SK-N-SH (cell line): ENCODE measurements at regions of chr19 and their contacts with region 1.

Region 1: DNA sequence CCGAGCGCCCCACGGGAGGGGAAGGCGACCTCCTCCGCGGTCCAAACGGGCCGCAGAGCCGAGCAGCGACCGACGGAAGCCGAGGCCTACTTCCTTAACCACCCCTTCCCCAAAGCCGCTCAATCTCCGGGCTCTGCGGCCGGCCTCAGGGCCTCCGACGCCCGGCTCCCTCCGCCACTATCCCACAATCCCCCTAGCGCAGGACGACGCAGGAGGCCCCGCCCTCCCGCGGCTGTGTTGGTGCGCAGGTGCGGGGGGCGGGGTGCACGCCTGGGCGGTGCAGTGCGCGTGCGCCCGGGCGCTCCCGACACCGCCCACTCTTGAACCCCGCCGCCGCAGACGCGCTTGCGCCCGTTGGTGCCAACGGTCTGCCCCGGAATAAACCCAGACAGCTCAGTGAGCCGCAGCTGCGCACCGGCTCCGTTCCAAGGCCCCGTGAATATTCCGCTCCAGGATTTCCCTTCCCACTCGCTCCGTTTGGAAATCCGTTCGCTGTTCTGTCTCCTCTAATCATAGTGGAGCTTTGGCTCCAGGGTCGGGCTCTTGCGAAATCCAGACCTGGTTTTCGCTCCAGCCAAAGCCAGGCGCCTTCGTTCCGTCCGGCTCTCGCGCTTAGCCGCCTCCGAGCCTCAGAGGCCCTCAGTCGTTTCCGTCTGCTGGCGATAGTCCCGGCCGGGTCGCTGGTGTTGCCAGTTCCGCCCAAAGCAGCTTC is at the start of gene PPP6R1:
- DNase-seq: peak; percentile 100
- H3K4me3 ChIP-seq: peak within 1 kb of the TSS; percentile 87 to 94
- H3K27ac ChIP-seq: peak within 1 kb of the TSS; percentile 84 to 98
- H3K4me1 ChIP-seq: peaks cover 17 to 26% of the 10 kb centered on the region in 2 experiments; a peak in 3 of 4 replicates
- H3K27me3 ChIP-seq: no peaks in the 10 kb centered on the region
- CTCF ChIP-seq: no peak
- EP300 ChIP-seq: peak; percentile 65 to 74; a peak in 2 of 4 replicates
- RAD21 ChIP-seq: peak; percentile 42
- polyA plus RNA-seq, gene PPP6R1: 44.9 and 47.8 TPM in 2 replicates

Region 2: DNA sequence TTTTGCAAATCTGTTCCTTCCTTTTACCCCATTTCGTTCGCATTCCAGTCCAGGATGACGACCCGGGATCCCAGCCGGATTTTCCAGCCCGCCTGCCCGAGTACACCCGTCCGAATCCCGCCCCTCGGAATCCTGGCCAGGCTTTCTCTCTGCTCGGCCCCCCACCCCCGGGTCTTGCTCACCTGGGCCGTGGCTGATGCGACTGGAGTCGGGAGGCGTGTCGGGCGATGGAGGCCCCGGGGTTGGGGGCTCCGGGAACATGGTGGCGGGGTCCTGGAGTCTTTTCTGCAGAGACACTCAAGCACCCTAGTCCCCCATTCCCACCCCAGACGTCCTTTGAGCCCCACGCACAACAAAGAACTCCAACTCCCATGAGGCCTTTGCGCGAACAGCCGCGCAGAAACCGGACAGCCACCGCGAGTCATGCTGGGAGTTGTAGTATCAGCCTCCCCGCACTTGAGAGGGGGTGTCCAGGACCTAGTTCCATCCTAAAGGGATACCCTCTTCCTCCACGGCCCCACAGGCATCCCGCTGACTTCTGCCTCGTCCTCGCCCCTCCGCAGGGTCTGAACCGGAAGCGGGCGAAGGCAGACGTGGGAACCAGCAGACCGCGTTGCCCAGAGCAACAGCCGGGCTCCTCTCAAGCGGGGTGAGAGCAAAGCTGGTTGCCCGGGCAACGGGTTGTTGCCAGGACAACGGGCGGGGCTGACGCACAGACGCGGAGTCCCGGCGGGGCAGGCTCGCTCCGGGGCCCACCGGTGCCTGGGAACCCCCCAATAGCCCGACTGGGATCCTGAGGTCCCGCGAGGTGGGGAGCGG is 80.0 kb before region 1 on chr19:
- CTCF ChIA-PET with region 1: interaction called, 3 read pairs
- POLR2A ChIA-PET with region 1: interaction called, 14 read pairs
- DNase-seq: peak; percentile 97
- H3K4me3 ChIP-seq: peak overlapping the region; percentile 54 to 56
- H3K27ac ChIP-seq: peak overlapping the region in 1 of 2 experiments; percentile 77; a peak in 1 of 4 replicates
- H3K4me1 ChIP-seq: peaks cover 0 to 6% of the 10 kb centered on the region in 2 experiments; a peak in 1 of 4 replicates
- H3K27me3 ChIP-seq: peaks cover 29% of the 10 kb centered on the region
- CTCF ChIP-seq: no peak
- EP300 ChIP-seq: peak in 1 of 2 experiments; percentile 29; a peak in 1 of 4 replicates
- RAD21 ChIP-seq: peak; percentile 29

Region 3: GRCh38 chr19:55216461-55217198 is 42.4 kb before region 1 on chr19:
- CTCF ChIA-PET with region 1: interaction called, 3 read pairs
- POLR2A ChIA-PET with region 1: interaction called, 17 read pairs
- DNase-seq: peak; percentile 91
- H3K4me3 ChIP-seq: peak overlapping the region; percentile 59 to 66
- H3K27ac ChIP-seq: peak overlapping the region; percentile 83 to 88
- H3K4me1 ChIP-seq: peaks cover 0 to 5% of the 10 kb centered on the region in 2 experiments; a peak in 1 of 4 replicates
- H3K27me3 ChIP-seq: no peaks in the 10 kb centered on the region
- CTCF ChIP-seq: no peak
- EP300 ChIP-seq: peak; percentile 64 to 81; a peak in 3 of 4 replicates
- RAD21 ChIP-seq: peak; percentile 48

Region 4: GRCh38 chr19:55227241-55228014 is 31.6 kb before region 1 on chr19:
- CTCF ChIA-PET with region 1: interaction called, 3 read pairs
- POLR2A ChIA-PET with region 1: interaction called, 14 read pairs
- DNase-seq: no peak
- H3K4me3 ChIP-seq: no peak overlapping the region
- H3K27ac ChIP-seq: peak overlapping the region in 1 of 2 experiments; percentile 78; a peak in 2 of 4 replicates
- H3K4me1 ChIP-seq: peaks cover 0 to 38% of the 10 kb centered on the region in 2 experiments; a peak in 1 of 4 replicates
- H3K27me3 ChIP-seq: no peaks in the 10 kb centered on the region
- CTCF ChIP-seq: no peak
- EP300 ChIP-seq: no peak
- RAD21 ChIP-seq: no peak

Region 5: DNA sequence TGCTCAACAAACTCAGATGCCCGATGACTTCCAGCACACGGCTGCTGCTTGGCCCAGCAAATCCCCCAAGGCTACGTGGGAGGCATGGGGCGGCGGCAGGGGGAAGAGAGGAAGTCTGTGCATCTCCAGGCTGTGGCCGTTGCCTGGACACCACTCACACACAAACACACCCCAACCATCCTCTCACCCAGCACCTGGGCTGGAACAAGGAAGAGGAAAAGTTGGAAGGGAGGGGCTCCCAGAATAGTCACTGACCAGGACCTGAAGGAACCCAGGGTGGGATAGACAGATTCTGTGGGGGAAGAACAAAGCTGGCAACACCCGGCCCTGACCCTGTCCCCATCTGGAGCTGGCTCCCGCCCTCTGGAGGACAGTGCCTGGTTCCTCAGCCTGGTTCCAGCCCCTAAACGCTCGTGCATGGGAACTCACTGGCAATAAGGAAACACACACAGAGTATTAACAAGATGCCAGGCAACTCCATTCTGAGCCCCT is 11.3 kb before region 1 on chr19:
- CTCF ChIA-PET with region 1: interaction called, 6 read pairs
- POLR2A ChIA-PET with region 1: interaction called, 11 read pairs
- DNase-seq: peak; percentile 71
- H3K4me3 ChIP-seq: no peak overlapping the region
- H3K27ac ChIP-seq: peak overlapping the region in 1 of 2 experiments; percentile 36; a peak in 1 of 4 replicates
- H3K4me1 ChIP-seq: peaks cover 0 to 23% of the 10 kb centered on the region in 2 experiments; a peak in 1 of 4 replicates
- H3K27me3 ChIP-seq: no peaks in the 10 kb centered on the region
- CTCF ChIP-seq: no peak
- EP300 ChIP-seq: no peak
- RAD21 ChIP-seq: peak; percentile 29; the same call in 1 of the 2 replicates

Region 6: GRCh38 chr19:55279770-55280643 is 21.0 kb after region 1 on chr19 and contains the start of gene HSPBP1:
- CTCF ChIA-PET with region 1: interaction called, 5 read pairs
- POLR2A ChIA-PET with region 1: interaction called, 19 read pairs
- DNase-seq: peak; percentile 92
- H3K4me3 ChIP-seq: peak within 1 kb of the TSS; percentile 76 to 94
- H3K27ac ChIP-seq: peak within 1 kb of the TSS; percentile 78 to 81
- H3K4me1 ChIP-seq: peaks cover 0 to 10% of the 10 kb centered on the region in 2 experiments; a peak in 1 of 4 replicates
- H3K27me3 ChIP-seq: no peaks in the 10 kb centered on the region
- CTCF ChIP-seq: no peak
- EP300 ChIP-seq: no peak
- RAD21 ChIP-seq: no peak
- polyA plus RNA-seq, gene HSPBP1: 51.7 and 55.4 TPM in 2 replicates